Activated CD4-positive, alpha-beta memory T cell treated with anti-CD3 and anti-CD28 coated beads for 36 hours (primary cell): ENCODE measurements at regions of chr4 and their contacts with region 1.

Region 1: GRCh38 chr4:44629280-44629866 is 22.1 kb downstream of the YIPF7 start:
- DNase-seq: peak; percentile 42
- H3K4me3 Mint-ChIP-seq: no peak overlapping the region
- H3K27ac Mint-ChIP-seq: no peak overlapping the region
- H3K4me1 Mint-ChIP-seq: peaks cover 1% of the 10 kb centered on the region
- H3K27me3 Mint-ChIP-seq: no peaks in the 10 kb centered on the region

Region 2: DNA sequence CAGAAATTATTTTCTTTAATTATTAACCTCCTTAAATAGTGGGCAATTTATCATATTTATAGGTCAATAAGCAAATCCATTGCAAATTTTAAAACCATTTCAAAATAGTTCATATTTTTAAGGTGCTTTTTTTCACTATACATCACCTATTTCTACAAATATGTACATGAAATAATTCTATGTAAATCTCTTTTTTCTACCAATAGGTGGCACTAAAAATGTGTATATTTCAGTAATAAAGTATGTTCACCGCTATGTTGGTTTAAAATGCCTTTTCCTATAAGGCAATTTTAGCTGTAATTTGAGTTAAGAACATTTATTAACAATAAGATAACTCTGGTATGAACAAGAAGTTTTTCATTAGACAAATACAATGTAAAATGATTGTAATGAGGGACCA is 853.0 kb before region 1 on chr4:
- CTCF ChIA-PET with region 1: no interaction called
- POLR2A ChIA-PET with region 1: no interaction called
- intact Hi-C with region 1: loop called (anchors 5 kb)
- DNase-seq: no peak
- H3K4me3 Mint-ChIP-seq: no peak overlapping the region
- H3K27ac Mint-ChIP-seq: no peak overlapping the region
- H3K4me1 Mint-ChIP-seq: no peaks in the 10 kb centered on the region
- H3K27me3 Mint-ChIP-seq: no peaks in the 10 kb centered on the region